ENCODE measurements at regions of chr6 and their contacts with region 1.

Region 1: DNA sequence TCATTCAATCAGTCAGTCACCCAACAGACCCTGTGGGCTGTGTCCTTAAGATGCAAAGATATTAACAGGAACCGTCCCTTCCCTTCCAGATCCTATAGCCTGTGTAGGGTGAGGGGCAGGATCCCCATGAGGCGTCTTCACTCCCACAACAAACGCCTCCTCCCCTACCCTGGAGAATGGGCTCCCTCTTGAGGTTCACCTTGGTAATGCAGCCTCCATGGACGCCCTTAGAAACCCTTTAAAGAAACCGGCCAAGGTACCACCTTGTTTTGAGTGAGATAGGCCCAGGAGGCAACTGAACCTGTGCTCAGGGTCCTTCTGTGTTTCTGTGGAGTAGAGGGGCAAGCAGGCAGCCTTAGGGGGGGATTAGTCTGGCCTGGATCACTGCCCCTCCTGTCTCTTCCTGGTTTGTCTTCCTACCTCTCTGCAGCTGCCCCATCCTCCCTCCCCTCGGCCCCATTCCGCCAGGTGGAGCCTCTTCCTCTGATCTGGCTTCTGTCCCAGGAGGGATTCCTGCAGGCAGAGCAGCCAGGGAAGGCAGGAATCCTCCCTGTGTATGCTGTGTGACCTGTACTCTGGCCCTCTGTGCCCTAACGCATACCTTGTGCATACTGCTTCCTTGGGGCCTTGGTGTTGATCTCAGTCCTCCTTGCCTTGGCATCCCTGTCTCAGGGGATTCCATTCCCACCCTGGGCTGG is 6.6 kb upstream of the GUCA1A start:
- DNase-seq: peak; percentile 61 to 73 (median 67)
- H3K4me3 ChIP-seq: no peak overlapping the region
- H3K4me3 Mint-ChIP-seq: no peak overlapping the region
- H3K27ac ChIP-seq: no peak overlapping the region
- H3K27ac Mint-ChIP-seq: peak overlapping the region in 2 of 7 donors; percentile 66 to 87
- H3K4me1 ChIP-seq: no peaks in the 10 kb centered on the region
- H3K4me1 Mint-ChIP-seq: peaks cover 0 to 8% (median 2%) of the 10 kb centered on the region in 4 donors
- H3K27me3 ChIP-seq: no peaks in the 10 kb centered on the region
- H3K27me3 Mint-ChIP-seq: peaks cover 3 to 5% of the 10 kb centered on the region in 2 donors

Region 2: DNA sequence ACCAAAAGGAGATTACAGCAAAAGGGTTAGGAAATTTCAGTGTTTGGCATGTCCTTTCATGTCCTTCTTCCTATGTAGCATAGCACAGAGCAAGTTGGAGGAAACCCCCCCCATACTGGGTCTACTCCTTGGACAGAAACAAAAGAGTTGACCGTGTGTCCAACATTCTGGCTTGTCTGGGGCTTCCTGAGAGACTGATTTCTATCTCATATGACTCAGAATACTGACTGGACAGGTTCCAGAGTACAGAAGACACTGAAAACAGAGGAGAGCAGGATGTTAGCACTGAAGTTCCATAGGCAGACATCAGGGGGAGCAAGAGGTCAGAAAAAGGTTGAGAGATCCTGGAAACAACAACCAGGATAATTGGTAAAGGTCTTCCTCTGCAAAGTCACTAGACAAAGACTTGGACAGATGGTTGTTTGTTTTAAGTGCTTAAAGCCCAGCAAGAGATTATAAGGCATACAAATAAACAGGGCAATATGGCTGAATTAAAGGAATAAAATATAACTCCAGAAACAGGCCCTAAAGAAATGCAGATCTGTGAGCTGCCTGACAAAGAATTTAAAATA is 319.8 kb before region 1 on chr6:
- CTCF ChIA-PET with region 1: interaction called, 18 read pairs
- POLR2A ChIA-PET with region 1: no interaction called
- intact Hi-C with region 1: loop called (anchors 1 kb)
- DNase-seq: peak; percentile 41 to 57 (median 51)
- H3K4me3 ChIP-seq: no peak overlapping the region
- H3K4me3 Mint-ChIP-seq: no peak overlapping the region
- H3K27ac ChIP-seq: no peak overlapping the region
- H3K27ac Mint-ChIP-seq: peak overlapping the region in 1 of 7 donors; percentile 53
- H3K4me1 ChIP-seq: no peaks in the 10 kb centered on the region
- H3K4me1 Mint-ChIP-seq: peaks cover 5 to 8% (median 6%) of the 10 kb centered on the region in 4 donors
- H3K27me3 ChIP-seq: no peaks in the 10 kb centered on the region
- H3K27me3 Mint-ChIP-seq: no peaks in the 10 kb centered on the region

Region 3: GRCh38 chr6:41901882-41902519 is 264.6 kb before region 1 on chr6:
- CTCF ChIA-PET with region 1: interaction called, 3 read pairs
- POLR2A ChIA-PET with region 1: no interaction called
- intact Hi-C with region 1: loop called (anchors 1 kb)
- DNase-seq: peak; percentile 54 to 61 (median 60)
- H3K4me3 ChIP-seq: no peak overlapping the region
- H3K4me3 Mint-ChIP-seq: no peak overlapping the region
- H3K27ac ChIP-seq: no peak overlapping the region
- H3K27ac Mint-ChIP-seq: peak overlapping the region in 3 of 7 donors; percentile 1 to 35 (median 4)
- H3K4me1 ChIP-seq: peaks cover 6% of the 10 kb centered on the region
- H3K4me1 Mint-ChIP-seq: peaks cover 7 to 13% (median 10%) of the 10 kb centered on the region in 4 donors
- H3K27me3 ChIP-seq: no peaks in the 10 kb centered on the region
- H3K27me3 Mint-ChIP-seq: no peaks in the 10 kb centered on the region

Region 4: DNA sequence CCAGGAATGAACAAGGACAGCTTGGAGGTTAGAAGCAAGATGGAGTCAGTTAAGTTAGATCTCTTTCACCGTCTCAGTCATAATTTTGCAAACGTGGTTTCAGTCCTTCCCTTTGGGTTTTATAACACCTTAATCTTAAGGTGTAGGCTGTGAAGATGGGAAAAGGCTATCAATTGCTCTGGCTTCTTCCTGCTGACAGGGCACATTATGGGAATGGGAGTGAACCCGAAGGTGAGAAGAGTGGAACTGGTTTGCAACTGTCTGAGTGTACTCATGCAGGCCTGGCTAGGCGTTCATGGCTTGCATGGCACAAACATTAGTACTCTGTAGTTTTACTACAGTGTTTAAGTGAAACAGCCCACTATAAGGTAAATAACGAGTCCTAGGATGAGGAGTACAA is 106.8 kb before region 1 on chr6:
- CTCF ChIA-PET with region 1: no interaction called
- POLR2A ChIA-PET with region 1: no interaction called
- intact Hi-C with region 1: no loop called
- DNase-seq: no peak
- H3K4me3 ChIP-seq: no peak overlapping the region
- H3K4me3 Mint-ChIP-seq: no peak overlapping the region
- H3K27ac ChIP-seq: no peak overlapping the region
- H3K27ac Mint-ChIP-seq: peak overlapping the region in 1 of 7 donors; percentile 43
- H3K4me1 ChIP-seq: no peaks in the 10 kb centered on the region
- H3K4me1 Mint-ChIP-seq: peaks cover 3 to 9% (median 4%) of the 10 kb centered on the region in 4 donors
- H3K27me3 ChIP-seq: no peaks in the 10 kb centered on the region
- H3K27me3 Mint-ChIP-seq: no peaks in the 10 kb centered on the region

Region 5: GRCh38 chr6:42075159-42075838 is 91.3 kb before region 1 on chr6:
- CTCF ChIA-PET with region 1: no interaction called
- POLR2A ChIA-PET with region 1: no interaction called
- intact Hi-C with region 1: loop called (anchors 1 kb)
- DNase-seq: peak; percentile 19 to 40 (median 33)
- H3K4me3 ChIP-seq: no peak overlapping the region
- H3K4me3 Mint-ChIP-seq: no peak overlapping the region
- H3K27ac ChIP-seq: no peak overlapping the region
- H3K27ac Mint-ChIP-seq: peak overlapping the region in 2 of 7 donors; percentile 16 to 24
- H3K4me1 ChIP-seq: no peaks in the 10 kb centered on the region
- H3K4me1 Mint-ChIP-seq: peaks cover 0 to 4% (median 1%) of the 10 kb centered on the region in 4 donors
- H3K27me3 ChIP-seq: no peaks in the 10 kb centered on the region
- H3K27me3 Mint-ChIP-seq: no peaks in the 10 kb centered on the region

Measured in CD4-positive, alpha-beta memory T cell (primary cell).